ENCODE measurements at regions of chr2 and their contacts with region 1.

Region 1: GRCh38 chr2:172931918-172932520 is 143.6 kb upstream of the MAP3K20 start:
- DNase-seq: peak; percentile 22 to 92 (median 76)

Region 2: DNA sequence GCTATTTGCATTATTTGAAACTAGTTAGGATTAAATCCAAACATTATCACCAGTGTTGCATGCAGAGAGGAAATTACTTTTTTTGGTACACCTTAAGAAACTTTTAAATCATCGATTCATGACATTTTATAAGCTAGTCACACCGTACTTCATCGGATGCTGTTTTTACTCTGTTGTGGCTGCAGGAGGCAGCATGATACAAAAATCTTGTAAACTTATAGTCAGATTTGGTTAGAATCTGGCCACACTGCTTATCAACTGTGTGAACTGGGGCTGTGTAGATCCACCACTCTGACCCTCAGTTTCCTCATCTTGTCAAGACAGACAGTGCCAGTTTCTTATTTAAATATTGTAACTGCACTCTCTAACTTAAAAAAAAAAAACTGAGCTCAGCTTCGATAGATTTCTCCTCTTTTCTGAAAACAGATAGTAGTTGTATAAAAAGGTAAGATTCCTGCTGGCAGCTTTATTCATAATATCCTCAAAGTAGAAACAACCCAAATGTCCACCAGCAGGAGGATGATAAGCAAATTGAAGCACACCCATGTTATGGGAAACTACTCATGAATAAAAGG is 118.6 kb before region 1 on chr2:
- intact Hi-C with region 1: loop called (anchors 5 kb)
- DNase-seq: peak in 4 of 42 donors; percentile 11 to 42 (median 19)

Region 3: GRCh38 chr2:172864182-172864581 is 67.8 kb before region 1 on chr2:
- intact Hi-C with region 1: loop called (anchors 10 kb)
- DNase-seq: peak in 41 of 42 donors; percentile 26 to 88 (median 65)